ENCODE measurements at regions of chr20 and their contacts with region 1.

Region 1: DNA sequence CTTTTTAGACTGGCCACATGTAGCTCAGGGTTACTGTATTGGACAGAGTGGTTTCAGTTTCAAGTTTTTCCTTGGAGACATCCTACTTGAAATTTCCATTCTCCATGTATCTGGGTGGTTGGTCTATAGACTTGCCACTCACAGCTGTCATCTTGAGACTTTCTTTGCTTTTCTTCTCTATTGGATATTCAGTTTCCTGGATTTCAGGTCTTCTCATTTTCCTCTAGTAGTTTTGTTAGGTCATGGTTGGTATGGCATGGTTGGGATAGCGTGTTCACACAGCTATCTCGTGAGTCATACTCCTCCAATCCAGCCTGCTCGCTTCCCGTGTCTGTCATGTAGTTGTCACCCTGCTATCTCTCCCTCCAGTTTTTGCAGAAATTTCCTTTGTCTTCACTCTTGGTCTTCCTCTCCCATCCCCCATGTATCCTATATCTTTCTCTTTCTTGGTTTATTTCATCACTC is 48.3 kb downstream of the PTPN1 start:
- DNase-seq: no peak
- H3K4me3 ChIP-seq: no peak overlapping the region
- H3K27ac ChIP-seq: no peak overlapping the region
- H3K4me1 ChIP-seq: peaks cover 10 to 32% (median 16%) of the 10 kb centered on the region in 4 donors
- H3K27me3 ChIP-seq: no peaks in the 10 kb centered on the region
- CTCF ChIP-seq: no peak
- EP300 ChIP-seq: no peak
- POLR2A ChIP-seq: no peak

Region 2: GRCh38 chr20:50509935-50510705 is 48.4 kb before region 1 on chr20 and contains the start of gene PTPN1:
- in situ Hi-C with region 1: loop called in 1 of 4 experiments (anchors 10 kb)
- intact Hi-C with region 1: no loop called
- DNase-seq: peak; percentile 99
- H3K4me3 ChIP-seq: peak within 1 kb of the TSS; percentile 91 to 96 (median 94)
- H3K27ac ChIP-seq: peak within 1 kb of the TSS; percentile 91 to 96 (median 93)
- H3K4me1 ChIP-seq: peaks cover 26 to 48% (median 44%) of the 10 kb centered on the region in 4 donors
- H3K27me3 ChIP-seq: no peaks in the 10 kb centered on the region
- CTCF ChIP-seq: peak; percentile 2 to 45 (median 23)
- EP300 ChIP-seq: no peak
- POLR2A ChIP-seq: peak; percentile 99
- total RNA-seq, gene PTPN1: 19.3 to 34.8 (median 28.8) TPM

Measured in transverse colon (tissue), 4 donors.